CD8-positive, alpha-beta T cell (primary cell): ENCODE measurements at regions of chr1 and their contacts with region 1.

Region 1: GRCh38 chr1:110619412-110620249 is 13.5 kb upstream of the KCNA2 start:
- DNase-seq: peak; percentile 79 to 96 (median 90)
- ATAC-seq: peak; percentile 84
- H3K4me3 ChIP-seq: peak overlapping the region; percentile 62 to 65
- H3K4me3 Mint-ChIP-seq: peak overlapping the region; percentile 89
- H3K27ac ChIP-seq: peak overlapping the region; percentile 58 to 73
- H3K27ac Mint-ChIP-seq: peak overlapping the region; percentile 89
- H3K4me1 ChIP-seq: peaks cover 28% of the 10 kb centered on the region
- H3K4me1 Mint-ChIP-seq: peaks cover 41% of the 10 kb centered on the region
- H3K27me3 ChIP-seq: peaks cover 0 to 4% of the 10 kb centered on the region in 2 experiments
- H3K27me3 Mint-ChIP-seq: no peaks in the 10 kb centered on the region
- CTCF ChIP-seq: peak; percentile 97

Region 2: DNA sequence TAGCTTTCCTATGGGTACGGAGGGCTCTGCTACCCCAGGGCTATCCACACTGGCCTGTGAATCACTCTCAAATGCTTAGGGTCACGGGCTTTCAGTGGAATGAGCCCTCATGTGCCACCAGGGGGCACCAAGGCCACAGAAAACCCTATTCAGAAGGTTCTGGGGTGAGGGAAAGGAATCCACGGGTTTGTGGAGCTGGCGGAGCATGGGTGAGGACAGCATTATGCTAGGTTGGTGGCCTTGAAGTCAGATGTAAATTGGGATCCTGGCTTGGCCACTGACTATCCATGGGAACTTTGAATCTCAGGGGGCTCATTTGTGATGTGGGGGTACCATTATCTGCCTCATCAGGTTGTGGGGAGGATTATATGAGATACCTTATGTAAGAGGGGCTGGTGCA is 207.1 kb before region 1 on chr1:
- CTCF ChIA-PET with region 1: interaction called, 3 read pairs
- POLR2A ChIA-PET with region 1: no interaction called
- intact Hi-C with region 1: loop called in 1 of 2 experiments (anchors 5 kb)
- DNase-seq: peak; percentile 25 to 72 (median 60)
- ATAC-seq: peak; percentile 41
- H3K4me3 ChIP-seq: no peak overlapping the region
- H3K4me3 Mint-ChIP-seq: no peak overlapping the region
- H3K27ac ChIP-seq: no peak overlapping the region
- H3K27ac Mint-ChIP-seq: no peak overlapping the region
- H3K4me1 ChIP-seq: peaks cover 6% of the 10 kb centered on the region
- H3K4me1 Mint-ChIP-seq: peaks cover 18% of the 10 kb centered on the region
- H3K27me3 ChIP-seq: no peaks in the 10 kb centered on the region
- H3K27me3 Mint-ChIP-seq: no peaks in the 10 kb centered on the region
- CTCF ChIP-seq: peak; percentile 64

Region 3: DNA sequence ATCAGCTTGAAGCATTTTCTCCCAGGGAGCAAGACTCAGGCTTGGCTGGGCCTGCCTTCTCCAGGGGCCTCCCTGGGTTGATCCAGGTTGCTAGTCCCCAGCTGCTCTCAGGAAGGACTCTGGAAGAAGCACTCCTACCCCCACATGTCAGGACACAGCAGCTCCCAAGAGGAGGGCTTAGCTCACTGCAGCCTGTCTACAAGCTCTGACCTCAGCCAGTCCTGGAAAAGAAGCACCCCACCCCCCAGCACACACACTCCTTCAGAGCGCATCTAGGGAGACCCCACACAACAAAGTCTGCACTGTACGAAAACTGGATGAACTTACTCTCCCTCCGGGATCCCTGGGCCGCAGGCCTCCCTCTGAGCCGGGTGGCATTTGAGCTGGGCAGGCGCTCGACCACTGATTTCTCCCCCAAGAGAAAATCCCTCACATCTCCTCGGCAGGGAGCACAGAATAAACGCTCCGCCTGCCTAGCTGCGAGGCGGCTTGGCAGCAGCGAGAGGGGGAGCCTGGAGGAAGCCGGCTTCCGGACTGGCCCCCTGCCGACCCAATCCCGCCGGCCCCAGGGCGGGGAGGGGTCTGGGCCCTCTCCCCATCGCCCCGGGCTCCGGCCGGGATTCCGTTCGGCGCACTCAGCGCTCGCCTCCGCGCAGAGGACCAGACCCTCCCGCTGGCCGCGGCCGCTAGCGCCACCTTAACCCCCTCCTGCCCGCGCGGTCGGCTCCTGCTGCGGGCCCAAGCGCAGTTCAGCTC is 13.6 kb before region 1 on chr1 and contains the start of gene KCNA2:
- CTCF ChIA-PET with region 1: interaction called, 24 read pairs
- POLR2A ChIA-PET with region 1: interaction called, 13 read pairs
- intact Hi-C with region 1: no loop called
- DNase-seq: peak in 3 of 9 experiments; percentile 22 to 50 (median 29)
- ATAC-seq: peak; percentile 37
- H3K4me3 ChIP-seq: peak within 1 kb of the TSS; percentile 55 to 68
- H3K4me3 Mint-ChIP-seq: peak within 1 kb of the TSS; percentile 81
- H3K27ac ChIP-seq: no peak within 1 kb of the TSS
- H3K27ac Mint-ChIP-seq: no peak within 1 kb of the TSS
- H3K4me1 ChIP-seq: peaks cover 14% of the 10 kb centered on the region
- H3K4me1 Mint-ChIP-seq: peaks cover 20% of the 10 kb centered on the region
- H3K27me3 ChIP-seq: peaks cover 20 to 25% of the 10 kb centered on the region in 2 experiments
- H3K27me3 Mint-ChIP-seq: peaks cover 54% of the 10 kb centered on the region
- CTCF ChIP-seq: no peak
- total RNA-seq, gene KCNA2: 0.39 to 0.46 TPM

Region 4: DNA sequence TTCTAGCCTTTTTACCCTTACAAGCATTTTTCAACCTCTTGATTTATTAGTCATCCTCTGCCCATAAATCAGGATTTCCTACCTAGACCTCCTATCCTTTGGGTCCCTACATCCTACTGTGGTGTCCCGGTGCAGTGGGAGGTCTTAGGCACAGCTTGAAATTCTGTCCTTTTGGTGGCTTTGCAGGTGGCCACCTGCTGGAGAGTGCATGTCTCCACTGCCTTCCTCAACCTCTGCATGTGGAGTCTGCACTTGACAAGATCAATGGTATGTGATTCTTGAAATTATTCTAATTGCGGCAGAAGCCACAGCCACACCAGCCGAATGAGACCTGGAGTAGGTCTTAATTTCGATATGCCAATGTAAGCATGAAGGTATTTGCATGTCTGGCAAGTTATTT is 66.6 kb after region 1 on chr1:
- CTCF ChIA-PET with region 1: interaction called, 12 read pairs
- POLR2A ChIA-PET with region 1: interaction called, 5 read pairs
- intact Hi-C with region 1: loop called in 1 of 2 experiments (anchors 1 kb)
- DNase-seq: peak in 7 of 9 experiments; percentile 10 to 65 (median 36)
- ATAC-seq: peak; percentile 84
- H3K4me3 ChIP-seq: no peak overlapping the region
- H3K4me3 Mint-ChIP-seq: no peak overlapping the region
- H3K27ac ChIP-seq: no peak overlapping the region
- H3K27ac Mint-ChIP-seq: no peak overlapping the region
- H3K4me1 ChIP-seq: no peaks in the 10 kb centered on the region
- H3K4me1 Mint-ChIP-seq: peaks cover 4% of the 10 kb centered on the region
- H3K27me3 ChIP-seq: no peaks in the 10 kb centered on the region
- H3K27me3 Mint-ChIP-seq: no peaks in the 10 kb centered on the region
- CTCF ChIP-seq: peak; percentile 34

Region 5: DNA sequence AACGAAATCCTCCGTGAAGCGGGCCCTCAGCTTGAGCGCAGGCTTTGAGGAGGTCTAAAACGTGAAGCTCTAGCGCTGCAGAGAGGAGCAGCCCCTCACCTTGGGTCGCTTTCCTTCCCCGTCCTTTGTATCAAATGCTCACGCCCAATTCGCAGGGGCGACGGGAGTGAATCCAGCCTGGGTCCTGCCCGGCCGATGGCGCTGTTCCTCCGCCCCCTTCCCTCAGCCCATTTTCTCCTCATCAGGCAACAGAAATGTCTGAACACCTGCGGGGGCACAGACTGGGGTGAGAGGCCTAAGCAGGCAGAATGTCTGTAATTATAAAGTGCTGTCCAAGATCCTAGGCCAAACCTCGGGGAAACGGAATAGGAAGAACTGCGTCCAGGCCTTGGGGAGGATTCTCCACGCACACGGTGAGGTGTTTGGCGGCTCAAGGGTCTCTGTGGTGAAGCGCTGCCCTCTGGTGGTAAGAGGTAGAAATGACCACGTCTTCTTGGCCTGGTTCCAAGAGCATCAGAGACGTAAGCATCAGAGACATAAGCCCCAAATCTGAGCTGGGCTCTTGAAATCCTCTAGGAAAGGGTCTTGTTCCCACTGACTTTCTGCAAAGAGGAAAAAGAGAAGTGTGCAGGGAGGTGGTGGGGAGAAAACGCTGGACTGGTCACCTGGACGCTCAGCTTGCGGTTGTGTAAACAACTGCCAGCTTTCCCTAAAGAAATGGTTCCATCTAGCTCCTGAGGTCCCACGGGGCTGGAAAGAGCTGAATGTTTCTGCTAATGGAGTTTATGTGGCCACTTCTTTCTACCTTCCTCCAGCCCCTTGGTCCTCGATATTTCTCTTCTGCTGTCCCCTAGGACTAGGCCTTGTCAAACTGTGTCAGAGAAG is 161.2 kb after region 1 on chr1:
- CTCF ChIA-PET with region 1: interaction called, 108 read pairs
- POLR2A ChIA-PET with region 1: interaction called, 12 read pairs
- intact Hi-C with region 1: loop called (anchors 1 kb)
- DNase-seq: peak; percentile 59 to 88 (median 76)
- ATAC-seq: peak; percentile 81
- H3K4me3 ChIP-seq: no peak overlapping the region
- H3K4me3 Mint-ChIP-seq: no peak overlapping the region
- H3K27ac ChIP-seq: no peak overlapping the region
- H3K27ac Mint-ChIP-seq: no peak overlapping the region
- H3K4me1 ChIP-seq: peaks cover 39% of the 10 kb centered on the region
- H3K4me1 Mint-ChIP-seq: peaks cover 46% of the 10 kb centered on the region
- H3K27me3 ChIP-seq: no peaks in the 10 kb centered on the region
- H3K27me3 Mint-ChIP-seq: peaks cover 5% of the 10 kb centered on the region
- CTCF ChIP-seq: peak; percentile 81

Region 6: DNA sequence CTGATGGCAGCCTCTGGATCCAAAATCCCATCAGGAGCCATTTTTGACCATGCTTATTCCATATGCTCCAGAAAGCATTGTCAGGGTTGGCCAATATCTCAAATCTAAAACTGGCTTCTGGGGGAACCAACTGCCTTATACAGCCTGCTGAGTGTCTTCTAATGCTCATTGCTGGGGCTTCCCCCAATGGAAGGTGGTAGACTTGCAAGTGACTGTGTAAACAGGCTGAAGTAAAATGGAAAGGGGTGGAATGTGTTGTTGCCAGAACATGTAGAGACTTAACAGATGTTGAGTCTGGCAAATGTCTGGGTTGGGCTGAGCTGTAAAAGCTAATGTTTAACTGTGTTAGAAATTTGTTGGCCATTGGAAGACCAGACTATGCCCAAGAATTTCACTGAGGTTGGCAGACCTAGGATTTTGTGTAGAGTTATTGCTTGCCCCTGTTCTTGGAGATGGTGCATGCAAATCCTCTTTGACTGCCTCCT is 366.8 kb after region 1 on chr1:
- CTCF ChIA-PET with region 1: no interaction called
- POLR2A ChIA-PET with region 1: no interaction called
- intact Hi-C with region 1: loop called in 1 of 2 experiments (anchors 10 kb)
- DNase-seq: peak in 1 of 9 experiments; percentile 11
- ATAC-seq: no peak
- H3K4me3 ChIP-seq: no peak overlapping the region
- H3K4me3 Mint-ChIP-seq: no peak overlapping the region
- H3K27ac ChIP-seq: no peak overlapping the region
- H3K27ac Mint-ChIP-seq: no peak overlapping the region
- H3K4me1 ChIP-seq: peaks cover 7% of the 10 kb centered on the region
- H3K4me1 Mint-ChIP-seq: peaks cover 18% of the 10 kb centered on the region
- H3K27me3 ChIP-seq: no peaks in the 10 kb centered on the region
- H3K27me3 Mint-ChIP-seq: peaks cover 2% of the 10 kb centered on the region
- CTCF ChIP-seq: no peak

Region 7: DNA sequence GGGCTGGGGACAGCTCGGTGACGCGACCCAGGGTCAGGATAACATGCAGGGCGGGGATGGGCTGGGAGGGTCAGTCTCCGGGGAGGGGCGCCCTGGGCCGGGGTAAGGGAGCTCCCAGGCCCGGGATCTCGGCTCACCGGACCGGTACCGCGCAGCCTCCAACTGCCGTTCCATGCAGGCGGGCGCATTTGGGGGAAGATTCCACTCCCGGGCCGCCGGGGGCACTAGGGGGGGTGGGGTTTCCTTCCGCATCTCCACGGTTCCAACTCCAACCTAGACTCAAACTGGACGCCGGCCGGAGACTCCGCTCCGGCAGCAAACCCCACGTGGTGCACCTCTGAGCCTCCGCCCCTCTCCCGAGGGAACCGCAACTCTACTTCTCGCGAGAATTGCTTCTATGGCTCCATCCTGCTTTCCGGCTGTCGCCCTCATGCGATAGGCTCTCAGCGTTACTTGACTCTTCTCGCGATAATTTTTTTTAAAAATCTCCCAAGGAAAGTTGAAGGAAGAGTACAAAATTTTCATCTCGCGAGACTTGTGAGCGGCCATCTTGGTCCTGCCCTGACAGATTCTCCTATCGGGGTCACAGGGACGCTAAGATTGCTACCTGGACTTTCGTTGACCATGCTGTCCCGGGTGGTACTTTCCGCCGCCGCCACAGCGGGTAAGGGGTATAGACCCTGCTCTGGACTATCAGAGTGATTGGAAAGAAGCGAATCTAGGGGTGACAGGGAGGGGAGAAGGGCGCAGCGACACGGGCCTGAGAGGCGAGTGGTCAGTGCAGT is 829.5 kb after region 1 on chr1 and contains the starts of genes ATP5PB and WDR77:
- CTCF ChIA-PET with region 1: no interaction called
- POLR2A ChIA-PET with region 1: no interaction called
- intact Hi-C with region 1: loop called in 1 of 2 experiments (anchors 10 kb)
- DNase-seq: peak; percentile 75 to 98 (median 89)
- ATAC-seq: peak; percentile 94
- H3K4me3 ChIP-seq: peak within 1 kb of the TSS; percentile 77 to 86
- H3K4me3 Mint-ChIP-seq: peak within 1 kb of the TSS; percentile 99
- H3K27ac ChIP-seq: peak within 1 kb of the TSS; percentile 75 to 83
- H3K27ac Mint-ChIP-seq: peak within 1 kb of the TSS; percentile 98
- H3K4me1 ChIP-seq: peaks cover 58% of the 10 kb centered on the region
- H3K4me1 Mint-ChIP-seq: peaks cover 84% of the 10 kb centered on the region
- H3K27me3 ChIP-seq: no peaks in the 10 kb centered on the region
- H3K27me3 Mint-ChIP-seq: no peaks in the 10 kb centered on the region
- CTCF ChIP-seq: no peak
- total RNA-seq, gene ATP5PB: 59.9 to 64.6 TPM
- total RNA-seq, gene WDR77: 9.5 to 11.4 TPM